PC-9 (cell line): ENCODE measurements at regions of chr9 and their contacts with region 1.

Region 1: GRCh38 chr9:120842690-120843499 is at the start of gene PSMD5:
- DNase-seq: peak; percentile 99
- H3K4me3 ChIP-seq: peak within 1 kb of the TSS; percentile 81
- H3K27ac ChIP-seq: peak within 1 kb of the TSS; percentile 81
- H3K4me1 ChIP-seq: peaks cover 19% of the 10 kb centered on the region
- H3K27me3 ChIP-seq: no peaks in the 10 kb centered on the region
- CTCF ChIP-seq: no peak
- total RNA-seq, gene PSMD5: 86.4 and 96.2 TPM in 2 replicates

Region 2: GRCh38 chr9:120579750-120580590 is 262.9 kb before region 1 on chr9 and contains the start of gene CDK5RAP2:
- CTCF ChIA-PET with region 1: no interaction called
- POLR2A ChIA-PET with region 1: no interaction called
- intact Hi-C with region 1: loop called (anchors 1 kb)
- DNase-seq: peak; percentile 91 to 95
- H3K4me3 ChIP-seq: peak within 1 kb of the TSS; percentile 79
- H3K27ac ChIP-seq: no peak within 1 kb of the TSS
- H3K4me1 ChIP-seq: peaks cover 13% of the 10 kb centered on the region
- H3K27me3 ChIP-seq: no peaks in the 10 kb centered on the region
- CTCF ChIP-seq: no peak
- total RNA-seq, gene CDK5RAP2: 113 and 138 TPM in 2 replicates

Region 3: GRCh38 chr9:120689860-120690259 is 153.0 kb before region 1 on chr9:
- CTCF ChIA-PET with region 1: no interaction called
- POLR2A ChIA-PET with region 1: interaction called, 12 read pairs
- intact Hi-C with region 1: no loop called
- DNase-seq: no peak
- H3K4me3 ChIP-seq: no peak overlapping the region
- H3K27ac ChIP-seq: peak overlapping the region; percentile 10; the same call in 1 of the 2 replicates
- H3K4me1 ChIP-seq: peaks cover 16% of the 10 kb centered on the region
- H3K27me3 ChIP-seq: no peaks in the 10 kb centered on the region
- CTCF ChIP-seq: no peak

Region 4: GRCh38 chr9:120868676-120869359 is 25.9 kb after region 1 on chr9:
- CTCF ChIA-PET with region 1: no interaction called
- POLR2A ChIA-PET with region 1: interaction called, 5 read pairs
- intact Hi-C with region 1: loop called (anchors 1 kb)
- DNase-seq: peak; percentile 92 to 99
- H3K4me3 ChIP-seq: peak overlapping the region; percentile 21; the same call in 1 of the 2 replicates
- H3K27ac ChIP-seq: no peak overlapping the region
- H3K4me1 ChIP-seq: peaks cover 21% of the 10 kb centered on the region
- H3K27me3 ChIP-seq: no peaks in the 10 kb centered on the region
- CTCF ChIP-seq: no peak

Region 5: DNA sequence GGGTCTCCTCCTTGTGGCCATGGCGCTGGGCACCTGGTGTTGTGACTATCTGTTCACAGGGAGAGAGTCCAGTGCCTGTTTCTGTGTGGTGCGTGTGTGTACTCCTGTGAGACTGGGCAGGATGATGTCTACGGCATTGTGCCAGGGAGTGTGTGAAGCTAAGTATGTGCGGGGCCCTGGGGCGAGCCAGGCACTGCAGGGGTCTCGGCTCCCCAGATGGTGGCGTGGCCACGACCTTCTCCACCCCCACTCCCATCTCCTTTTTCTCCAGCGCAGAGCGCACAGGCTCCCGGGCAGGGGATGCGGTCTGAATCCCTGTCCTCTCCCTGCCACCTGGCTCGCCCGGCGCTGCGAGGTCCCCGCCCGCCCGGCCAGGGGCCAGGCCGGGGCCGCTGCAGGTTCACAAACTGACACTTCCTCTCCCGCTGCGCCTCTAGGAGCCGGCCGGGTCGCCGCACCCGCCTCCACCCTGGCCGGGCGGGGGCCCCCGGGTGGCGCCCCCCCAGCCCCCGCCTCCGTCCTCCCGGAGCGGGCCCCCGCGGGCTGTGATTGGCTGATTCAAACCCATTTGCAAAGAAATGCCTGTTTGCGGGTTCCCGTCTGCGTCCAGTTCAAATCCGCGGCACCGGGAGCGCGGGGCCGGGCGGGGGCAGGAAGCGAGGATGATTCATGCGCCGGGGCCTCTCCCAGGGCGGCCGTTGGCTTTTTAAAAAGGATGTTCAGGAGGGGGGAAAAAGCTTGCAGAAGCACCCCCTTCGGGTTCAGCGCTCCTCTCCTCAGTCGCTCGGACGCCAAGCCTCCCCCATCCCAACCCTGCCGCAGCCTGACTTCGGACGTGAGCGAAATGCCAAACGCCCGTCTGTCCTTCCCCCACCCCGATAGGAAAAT is 33.3 kb after region 1 on chr9:
- CTCF ChIA-PET with region 1: no interaction called
- POLR2A ChIA-PET with region 1: interaction called, 5 read pairs
- intact Hi-C with region 1: loop called (anchors 1 kb)
- DNase-seq: peak; percentile 73 to 95
- H3K4me3 ChIP-seq: peak overlapping the region; percentile 87
- H3K27ac ChIP-seq: peak overlapping the region; percentile 76
- H3K4me1 ChIP-seq: peaks cover 49% of the 10 kb centered on the region
- H3K27me3 ChIP-seq: no peaks in the 10 kb centered on the region
- CTCF ChIP-seq: no peak

Region 6: DNA sequence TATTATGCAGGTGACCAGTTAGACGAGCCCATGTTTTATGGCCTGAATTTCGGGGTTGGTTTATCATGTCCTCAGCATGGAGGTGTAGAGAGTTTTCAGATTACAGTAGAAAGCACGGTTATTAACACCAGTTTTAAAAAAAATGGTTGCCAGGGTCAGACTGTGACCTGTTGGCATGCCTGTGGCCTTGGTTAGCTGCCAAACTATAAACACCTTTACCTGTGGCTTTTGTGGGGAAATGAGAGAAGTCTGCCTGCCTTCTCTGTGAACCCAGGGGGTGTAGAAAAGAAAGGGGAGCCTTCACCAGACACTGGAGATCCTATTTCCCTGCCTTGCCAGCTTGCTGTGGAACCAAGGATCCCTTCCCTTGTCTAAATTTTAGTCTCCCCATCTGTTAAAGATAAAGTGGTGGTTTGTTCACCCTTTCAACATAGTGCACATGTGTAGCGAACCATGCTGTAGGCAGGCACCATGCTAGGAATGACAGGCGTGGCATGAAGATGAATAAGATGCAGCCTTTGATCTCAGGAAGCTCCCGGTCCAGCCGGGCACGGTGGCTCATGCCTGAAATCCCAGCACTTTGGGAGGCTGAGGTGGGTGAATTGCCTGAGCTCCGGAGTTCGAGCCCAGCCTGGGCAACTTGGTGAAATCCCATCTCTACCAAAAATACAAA is 40.2 kb after region 1 on chr9:
- CTCF ChIA-PET with region 1: no interaction called
- POLR2A ChIA-PET with region 1: no interaction called
- intact Hi-C with region 1: loop called (anchors 1 kb)
- DNase-seq: peak; percentile 73 to 77
- H3K4me3 ChIP-seq: no peak overlapping the region
- H3K27ac ChIP-seq: no peak overlapping the region
- H3K4me1 ChIP-seq: peaks cover 42% of the 10 kb centered on the region
- H3K27me3 ChIP-seq: no peaks in the 10 kb centered on the region
- CTCF ChIP-seq: no peak

Region 7: DNA sequence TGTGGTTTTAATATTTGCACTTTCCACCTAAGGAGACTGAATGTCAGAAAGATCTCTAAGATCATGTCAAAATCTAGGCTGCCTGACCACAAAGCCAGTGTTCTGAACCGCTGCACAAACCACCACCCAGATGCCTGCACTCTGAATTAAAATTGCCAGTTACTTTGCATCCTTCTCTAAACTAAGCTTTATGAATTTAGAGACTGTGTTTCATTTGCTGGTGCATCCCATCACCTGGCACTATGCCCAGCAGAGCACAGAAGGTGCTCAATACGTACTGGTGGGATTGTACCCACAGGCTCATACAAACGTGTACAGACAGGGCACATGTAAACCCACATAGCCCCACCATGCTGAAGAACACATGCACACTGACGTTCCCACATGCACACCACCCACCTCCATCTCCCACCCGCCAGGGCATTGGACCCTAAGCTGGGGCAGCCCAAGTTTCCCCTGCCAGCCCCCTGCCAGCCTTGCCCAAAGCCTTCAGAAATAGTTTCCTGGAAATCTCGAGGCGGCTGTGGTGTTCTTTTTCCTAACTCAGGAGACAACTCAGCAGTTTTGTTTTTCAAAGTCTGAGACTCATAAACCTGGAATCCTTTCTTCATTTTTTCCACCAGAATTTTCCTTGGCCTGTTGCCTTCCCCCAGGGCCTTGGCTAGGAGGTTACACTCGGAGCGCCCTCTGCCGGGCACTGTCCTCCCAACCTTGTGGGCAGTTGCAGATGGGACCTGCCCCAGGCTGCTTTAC is 93.3 kb after region 1 on chr9:
- CTCF ChIA-PET with region 1: no interaction called
- POLR2A ChIA-PET with region 1: no interaction called
- intact Hi-C with region 1: loop called (anchors 1 kb)
- DNase-seq: peak; percentile 80 to 93
- H3K4me3 ChIP-seq: no peak overlapping the region
- H3K27ac ChIP-seq: peak overlapping the region; percentile 25; the same call in 1 of the 2 replicates
- H3K4me1 ChIP-seq: peaks cover 22% of the 10 kb centered on the region
- H3K27me3 ChIP-seq: no peaks in the 10 kb centered on the region
- CTCF ChIP-seq: peak; percentile 93